ENCODE measurements at regions of chr15 and their contacts with region 1.

Region 1: DNA sequence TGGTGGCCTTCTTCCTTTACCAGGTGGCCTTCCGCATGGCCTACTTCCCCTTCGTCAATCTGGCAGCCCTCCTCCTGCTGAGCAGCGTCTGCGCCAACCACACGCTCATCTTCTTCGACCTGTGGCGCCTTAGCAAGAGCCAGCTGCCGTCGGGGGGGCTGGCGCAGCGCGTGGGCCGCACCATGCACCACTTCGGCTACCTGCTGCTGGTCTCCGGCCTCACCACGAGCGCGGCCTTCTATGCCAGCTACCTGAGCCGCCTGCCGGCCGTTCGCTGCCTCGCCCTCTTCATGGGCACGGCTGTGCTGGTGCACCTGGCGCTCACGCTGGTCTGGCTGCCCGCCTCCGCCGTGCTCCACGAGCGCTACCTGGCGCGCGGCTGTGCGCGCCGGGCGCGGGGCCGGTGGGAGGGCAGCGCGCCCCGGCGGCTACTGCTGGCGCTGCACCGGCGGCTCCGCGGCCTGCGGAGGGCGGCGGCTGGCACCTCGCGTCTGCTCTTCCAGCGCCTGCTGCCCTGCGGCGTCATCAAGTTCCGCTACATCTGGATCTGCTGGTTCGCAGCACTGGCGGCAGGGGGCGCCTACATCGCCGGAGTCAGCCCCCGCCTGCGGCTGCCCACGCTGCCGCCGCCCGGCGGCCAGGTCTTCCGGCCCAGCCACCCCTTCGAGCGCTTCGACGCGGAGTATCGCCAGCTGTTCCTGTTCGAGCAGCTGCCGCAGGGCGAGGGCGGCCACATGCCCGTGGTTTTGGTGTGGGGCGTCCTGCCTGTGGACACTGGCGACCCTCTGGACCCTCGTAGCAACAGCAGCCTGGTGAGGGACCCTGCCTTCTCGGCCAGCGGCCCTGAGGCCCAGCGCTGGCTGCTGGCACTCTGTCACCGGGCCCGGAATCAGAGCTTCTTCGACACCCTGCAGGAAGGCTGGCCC is 9.9 kb downstream of the DISP2 start:
- DNase-seq: peak; percentile 92
- CTCF ChIP-seq: peak; percentile 88

Region 2: GRCh38 chr15:40217159-40217824 is 150.7 kb before region 1 on chr15:
- CTCF ChIA-PET with region 1: no interaction called
- POLR2A ChIA-PET with region 1: no interaction called
- DNase-seq: peak; percentile 64
- CTCF ChIP-seq: peak; percentile 67

Region 3: GRCh38 chr15:40323239-40323952 is 44.6 kb before region 1 on chr15 and contains the start of gene INAFM2:
- CTCF ChIA-PET with region 1: interaction called, 13 read pairs
- POLR2A ChIA-PET with region 1: no interaction called
- DNase-seq: peak; percentile 96
- CTCF ChIP-seq: peak; percentile 40

Region 4: DNA sequence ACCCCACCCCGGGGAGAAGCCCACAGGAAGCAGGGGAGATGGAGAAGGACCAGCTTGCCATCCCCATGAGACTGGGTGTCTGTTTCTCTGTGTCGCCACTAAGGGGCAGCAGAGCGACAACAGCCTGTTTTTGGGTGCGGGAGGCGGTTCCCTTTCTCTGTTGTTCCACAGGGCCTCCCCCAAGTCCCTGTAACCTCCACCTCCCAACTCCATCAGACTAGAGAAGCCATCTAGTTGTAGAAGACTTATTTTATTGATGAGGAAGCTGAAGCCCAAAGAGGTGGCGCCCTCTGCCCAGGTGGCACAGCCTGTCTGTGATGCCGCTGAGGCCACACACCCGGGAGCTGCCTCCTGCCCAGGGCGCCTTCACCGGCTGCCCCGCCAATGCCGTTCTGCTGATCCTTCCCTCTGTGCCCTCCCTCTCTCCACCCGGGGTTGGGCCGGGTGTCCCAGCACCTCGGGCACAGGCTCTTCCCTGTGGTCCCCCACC is 23.3 kb before region 1 on chr15:
- CTCF ChIA-PET with region 1: interaction called, 29 read pairs
- POLR2A ChIA-PET with region 1: no interaction called
- DNase-seq: peak; percentile 88
- CTCF ChIP-seq: peak; percentile 89

Region 5: GRCh38 chr15:40357723-40358470 is 10.1 kb before region 1 on chr15 and contains the start of gene DISP2:
- CTCF ChIA-PET with region 1: interaction called, 70 read pairs
- POLR2A ChIA-PET with region 1: no interaction called
- DNase-seq: peak; percentile 99
- CTCF ChIP-seq: no peak

Region 6: GRCh38 chr15:40382580-40383456 is 14.9 kb after region 1 on chr15 and contains the start of gene KNSTRN:
- CTCF ChIA-PET with region 1: interaction called, 16 read pairs
- POLR2A ChIA-PET with region 1: no interaction called
- DNase-seq: peak; percentile 96
- CTCF ChIP-seq: no peak

Region 7: GRCh38 chr15:40405501-40406381 is 37.8 kb after region 1 on chr15 and contains the start of gene IVD:
- CTCF ChIA-PET with region 1: interaction called, 20 read pairs
- POLR2A ChIA-PET with region 1: no interaction called
- DNase-seq: peak; percentile 95
- CTCF ChIP-seq: no peak

Region 8: DNA sequence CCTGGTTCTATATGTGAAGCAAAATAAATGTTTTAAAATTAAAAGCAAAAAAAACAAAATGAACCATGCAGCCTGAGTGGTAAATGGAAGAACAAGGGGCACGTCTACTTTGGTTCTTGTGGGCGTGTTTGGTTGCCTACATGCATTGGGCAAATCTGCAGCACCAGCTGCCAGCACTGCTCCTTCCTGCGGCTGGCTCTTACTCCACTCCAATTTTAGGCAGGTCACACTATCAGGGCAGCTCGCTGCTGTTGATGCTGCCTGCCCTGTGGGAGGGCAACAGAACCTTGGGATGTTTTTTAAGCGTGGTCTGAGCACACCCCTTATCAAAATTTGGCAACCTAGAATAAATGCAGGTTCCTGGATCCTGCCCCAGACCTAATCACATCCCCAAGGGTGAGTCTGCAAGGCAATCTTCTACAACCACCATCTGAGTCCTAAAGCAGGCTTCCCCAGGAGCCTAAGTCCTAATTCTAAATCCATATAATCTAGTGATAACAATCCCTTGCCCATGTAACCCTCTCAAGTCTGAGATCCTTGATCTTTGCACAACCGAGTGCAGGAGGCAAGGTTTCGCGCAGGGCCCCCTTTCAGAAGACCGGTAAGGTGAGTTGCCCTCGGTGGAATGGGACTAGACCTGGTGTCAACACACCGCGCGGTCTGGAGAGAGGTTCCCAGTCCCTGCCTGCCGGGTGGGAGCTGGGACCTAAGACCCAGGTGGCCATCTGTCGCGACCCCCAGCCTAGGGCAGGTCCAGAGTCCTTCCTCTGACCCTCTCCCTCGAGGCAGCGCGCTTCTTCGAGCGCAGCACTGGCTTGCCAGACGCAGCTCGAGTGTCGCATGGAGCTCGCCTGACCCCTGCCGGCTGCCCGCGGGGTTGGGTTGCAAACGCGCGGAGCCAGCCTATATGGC is 53.6 kb after region 1 on chr15:
- CTCF ChIA-PET with region 1: interaction called, 179 read pairs
- POLR2A ChIA-PET with region 1: no interaction called
- DNase-seq: peak; percentile 91
- CTCF ChIP-seq: peak; percentile 94